ENCODE measurements at regions of chr14 and their contacts with region 1.

Region 1: GRCh38 chr14:65002586-65003210 is 16.0 kb downstream of the FNTB start:
- DNase-seq: no peak
- ATAC-seq: no peak
- H3K4me3 Mint-ChIP-seq: no peak overlapping the region
- H3K27ac Mint-ChIP-seq: peak overlapping the region; percentile 33
- H3K4me1 Mint-ChIP-seq: peaks cover 46% of the 10 kb centered on the region
- H3K27me3 Mint-ChIP-seq: no peaks in the 10 kb centered on the region

Region 2: DNA sequence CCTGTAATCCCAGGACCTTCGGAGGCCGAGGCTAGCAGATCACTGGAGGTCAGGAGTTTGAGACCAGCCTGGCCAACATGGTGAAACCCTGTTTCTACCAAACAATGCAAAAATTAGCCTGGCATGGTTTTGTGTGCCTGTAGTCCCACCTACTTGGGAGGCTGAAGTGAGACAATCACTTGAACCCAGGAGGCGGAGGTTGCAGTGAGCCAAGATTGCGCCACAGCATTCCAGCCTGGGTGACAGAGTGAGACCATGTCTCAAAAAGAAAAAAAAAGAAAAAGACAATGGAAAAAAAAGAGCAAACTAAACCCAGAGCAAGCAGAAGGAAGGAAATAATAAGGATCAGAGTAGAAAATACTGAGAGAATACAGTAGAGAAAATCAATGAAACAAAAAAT is 83.1 kb before region 1 on chr14:
- CTCF ChIA-PET with region 1: no interaction called
- DNase-seq: no peak
- ATAC-seq: no peak
- H3K4me3 Mint-ChIP-seq: no peak overlapping the region
- H3K27ac Mint-ChIP-seq: no peak overlapping the region
- H3K4me1 Mint-ChIP-seq: peaks cover 49% of the 10 kb centered on the region
- H3K27me3 Mint-ChIP-seq: no peaks in the 10 kb centered on the region

Region 3: DNA sequence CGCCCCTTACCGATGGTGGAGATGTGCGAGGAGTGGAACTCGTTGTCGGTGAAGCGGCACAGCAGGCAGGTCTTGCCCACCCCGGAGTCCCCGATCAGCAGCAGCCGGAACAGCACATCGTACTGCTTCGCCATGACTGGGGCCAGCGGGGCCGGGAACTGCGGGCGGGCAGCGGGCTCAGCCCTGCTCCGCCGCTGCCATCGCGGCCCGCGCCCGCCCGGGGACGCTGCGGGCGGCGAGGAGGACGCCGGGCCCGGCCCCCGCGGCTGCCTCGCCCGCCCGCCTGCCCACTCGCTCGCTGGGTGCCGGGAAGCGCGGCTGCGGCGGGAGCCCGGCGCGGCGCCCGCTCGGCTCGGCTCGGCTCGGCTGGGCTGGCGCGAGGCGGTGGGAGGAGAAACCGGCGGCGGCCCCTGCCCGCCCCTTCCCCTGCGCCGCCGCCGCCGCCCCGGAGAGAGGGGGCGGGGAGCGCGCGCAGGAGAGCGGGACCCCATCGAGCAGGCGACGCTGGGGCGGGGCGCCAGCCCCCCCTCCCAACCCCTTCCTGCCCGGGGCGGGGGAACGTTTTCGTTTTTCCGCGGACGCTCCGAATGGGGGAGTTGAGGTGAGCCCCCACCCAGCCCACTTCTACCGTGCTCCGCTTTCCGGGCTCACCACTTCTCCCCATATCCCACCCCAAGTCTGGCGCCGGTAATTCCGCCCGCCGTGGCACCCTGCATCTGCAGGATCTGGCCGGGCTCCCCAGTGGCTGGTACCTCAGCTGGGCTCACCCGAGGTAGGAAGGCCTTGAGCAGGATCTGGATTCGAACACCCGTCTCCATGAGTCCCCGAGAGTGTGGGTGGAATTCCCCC is 30.5 kb before region 1 on chr14 and contains the start of gene RAB15:
- CTCF ChIA-PET with region 1: no interaction called
- DNase-seq: no peak
- ATAC-seq: peak; percentile 80
- H3K4me3 Mint-ChIP-seq: peak within 1 kb of the TSS; percentile 68
- H3K27ac Mint-ChIP-seq: no peak within 1 kb of the TSS
- H3K4me1 Mint-ChIP-seq: peaks cover 4% of the 10 kb centered on the region
- H3K27me3 Mint-ChIP-seq: peaks cover 24% of the 10 kb centered on the region
- total RNA-seq, gene RAB15: 2.1 to 2.3 TPM

Region 4: GRCh38 chr14:65019944-65020566 is 17.4 kb after region 1 on chr14:
- CTCF ChIA-PET with region 1: interaction called, 11 read pairs
- DNase-seq: no peak
- ATAC-seq: peak; percentile 57
- H3K4me3 Mint-ChIP-seq: no peak overlapping the region
- H3K27ac Mint-ChIP-seq: no peak overlapping the region
- H3K4me1 Mint-ChIP-seq: peaks cover 2% of the 10 kb centered on the region
- H3K27me3 Mint-ChIP-seq: no peaks in the 10 kb centered on the region

Measured in activated CD8-positive, alpha-beta memory T cell treated with anti-CD3 and anti-CD28 coated beads, Interleukin-2, amount 10 ng/mL, durations not matched to agents 7 days and 5 days (primary cell).